ENCODE measurements at regions of chr14 and their contacts with region 1.

Region 1: DNA sequence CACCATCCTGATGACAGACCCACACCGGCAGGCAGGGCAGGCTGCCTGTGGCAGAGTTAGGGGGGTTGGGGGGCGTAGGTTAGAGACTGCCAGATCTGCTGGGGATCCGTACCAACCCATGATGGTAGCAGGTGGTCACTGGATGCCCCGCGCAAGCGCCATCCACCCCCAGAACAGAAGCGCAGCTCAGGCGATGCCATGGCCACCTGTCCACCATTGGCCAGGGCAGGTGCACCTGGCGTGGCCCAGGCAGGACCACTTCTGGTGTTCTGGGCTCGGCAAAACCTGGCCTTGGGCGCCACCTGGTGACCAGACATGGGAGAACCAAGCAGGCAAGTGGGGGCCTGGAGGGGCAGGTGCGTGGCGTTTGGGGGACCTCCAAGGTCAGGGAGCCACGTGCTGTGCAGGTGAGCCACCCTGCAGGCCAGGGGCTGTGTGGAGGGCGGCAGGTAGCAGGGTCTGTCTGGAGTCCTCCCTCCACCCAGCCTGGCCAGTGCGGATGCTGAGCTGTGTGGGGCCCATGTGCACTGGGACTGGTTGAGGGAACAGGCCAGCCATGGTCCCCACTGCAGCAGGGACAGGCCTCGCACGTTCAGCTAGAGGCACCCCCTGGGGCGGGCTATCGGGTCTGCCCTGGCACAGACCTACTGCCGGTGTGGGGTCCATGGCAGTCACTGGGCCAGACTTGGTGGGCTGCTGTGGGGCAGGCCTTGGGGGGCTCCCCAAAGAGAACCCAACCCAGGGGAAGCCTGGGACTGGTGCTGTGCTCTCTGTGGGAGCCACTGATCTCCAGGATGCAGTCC is 15.6 kb downstream of the BAG5 start:
- DNase-seq: no peak
- H3K4me3 ChIP-seq: no peak overlapping the region
- H3K27ac ChIP-seq: no peak overlapping the region
- H3K4me1 ChIP-seq: peaks cover 68% of the 10 kb centered on the region
- H3K27me3 ChIP-seq: no peaks in the 10 kb centered on the region
- CTCF ChIP-seq: peak; percentile 95 to 98 (median 95)
- POLR2A ChIP-seq: no peak

Region 2: DNA sequence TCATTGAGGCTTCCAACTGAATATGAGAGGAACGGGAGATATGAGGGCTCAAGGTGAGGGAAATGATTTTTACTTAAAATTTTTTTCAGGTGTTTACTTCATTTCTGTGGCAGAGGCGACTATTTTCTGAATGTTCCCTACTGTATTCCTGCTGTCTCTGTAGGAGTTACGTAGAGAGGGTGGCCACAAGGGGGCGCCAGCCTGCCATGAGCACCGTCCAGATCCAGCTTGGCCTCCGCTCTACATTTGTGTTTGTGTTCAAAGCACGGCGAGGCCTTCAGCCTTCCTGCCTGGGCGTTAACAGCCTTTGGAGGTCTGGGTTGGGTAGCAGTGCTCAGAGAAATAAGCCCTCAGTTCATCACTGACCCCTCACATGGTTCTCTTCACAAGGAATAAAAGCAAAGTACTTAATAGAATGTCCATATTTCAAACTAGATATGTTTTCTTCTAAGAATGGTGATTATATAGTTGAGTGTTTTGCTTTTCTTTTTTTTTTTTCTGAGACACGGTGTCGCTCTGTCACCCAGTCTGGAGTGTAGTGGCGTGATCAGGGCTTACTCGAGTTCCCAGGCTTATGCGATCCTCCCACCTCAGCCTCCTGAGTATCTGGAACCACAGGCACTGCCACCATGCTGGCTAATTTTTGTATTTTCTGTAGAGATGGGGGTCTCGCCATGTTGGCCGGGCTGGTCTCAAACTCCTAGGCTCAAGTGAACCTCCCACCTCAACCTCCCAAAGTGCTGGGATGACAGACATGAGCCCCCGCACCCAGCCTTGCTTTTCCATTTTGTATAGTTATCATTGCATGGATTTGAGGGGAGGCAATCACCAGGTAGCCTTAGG is 46.5 kb before region 1 on chr14:
- intact Hi-C with region 1: loop called (anchors 5 kb)
- DNase-seq: no peak
- H3K4me3 ChIP-seq: no peak overlapping the region
- H3K27ac ChIP-seq: peak overlapping the region; percentile 45
- H3K4me1 ChIP-seq: peaks cover 11% of the 10 kb centered on the region
- H3K27me3 ChIP-seq: no peaks in the 10 kb centered on the region
- CTCF ChIP-seq: peak; percentile 73 to 87 (median 74)
- POLR2A ChIP-seq: no peak

Region 3: DNA sequence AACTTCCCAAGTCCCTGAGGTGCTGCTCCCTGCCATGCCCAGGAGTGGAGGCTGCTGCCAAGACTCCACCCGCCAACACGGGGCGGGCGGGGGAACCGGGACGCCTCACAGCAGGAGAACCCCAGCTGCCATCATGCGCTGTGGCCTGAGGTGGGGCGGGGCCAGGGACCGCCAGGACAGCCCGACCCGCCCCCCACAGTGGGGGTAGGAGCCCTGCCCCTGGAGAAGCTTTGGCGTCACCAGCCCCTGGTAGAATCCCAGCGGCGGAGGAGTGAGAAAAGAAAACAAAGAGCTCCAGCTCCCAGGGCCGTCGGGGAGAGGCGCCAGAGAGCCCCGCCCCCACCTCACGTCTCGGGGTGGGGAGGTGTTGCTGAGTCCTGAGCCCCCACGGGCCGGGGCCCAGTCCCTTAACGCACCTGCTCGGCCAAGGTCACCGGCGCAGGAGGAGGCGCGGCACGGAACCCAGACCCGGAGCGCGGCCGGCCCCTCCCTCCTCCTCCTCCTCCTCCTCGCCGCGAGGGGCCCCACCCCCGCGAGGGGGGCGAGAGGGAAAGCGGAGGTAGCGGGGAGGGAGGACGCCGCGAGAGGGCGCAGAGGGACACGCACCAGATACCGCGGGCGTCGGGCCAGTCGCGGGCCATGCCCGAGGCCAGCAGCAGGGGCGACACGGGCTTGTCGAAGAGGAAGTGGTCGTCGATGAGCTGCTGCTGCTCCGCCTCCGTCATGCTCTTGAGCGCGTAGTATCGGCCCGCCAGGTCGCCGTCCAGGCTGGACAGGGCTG is 26.0 kb before region 1 on chr14:
- intact Hi-C with region 1: loop called (anchors 2 kb)
- DNase-seq: no peak
- H3K4me3 ChIP-seq: peak overlapping the region; percentile 56 to 65
- H3K27ac ChIP-seq: peak overlapping the region; percentile 90
- H3K4me1 ChIP-seq: peaks cover 51% of the 10 kb centered on the region
- H3K27me3 ChIP-seq: no peaks in the 10 kb centered on the region
- CTCF ChIP-seq: peak; percentile 18 to 69 (median 44)
- POLR2A ChIP-seq: no peak